Activated CD4-positive, alpha-beta memory T cell treated with anti-CD3 and anti-CD28 coated beads, Interleukin-2, amount 10 ng/mL, durations not matched to agents 7 days and 5 days (primary cell): ENCODE measurements at regions of chr2 and their contacts with region 1.

Region 1: DNA sequence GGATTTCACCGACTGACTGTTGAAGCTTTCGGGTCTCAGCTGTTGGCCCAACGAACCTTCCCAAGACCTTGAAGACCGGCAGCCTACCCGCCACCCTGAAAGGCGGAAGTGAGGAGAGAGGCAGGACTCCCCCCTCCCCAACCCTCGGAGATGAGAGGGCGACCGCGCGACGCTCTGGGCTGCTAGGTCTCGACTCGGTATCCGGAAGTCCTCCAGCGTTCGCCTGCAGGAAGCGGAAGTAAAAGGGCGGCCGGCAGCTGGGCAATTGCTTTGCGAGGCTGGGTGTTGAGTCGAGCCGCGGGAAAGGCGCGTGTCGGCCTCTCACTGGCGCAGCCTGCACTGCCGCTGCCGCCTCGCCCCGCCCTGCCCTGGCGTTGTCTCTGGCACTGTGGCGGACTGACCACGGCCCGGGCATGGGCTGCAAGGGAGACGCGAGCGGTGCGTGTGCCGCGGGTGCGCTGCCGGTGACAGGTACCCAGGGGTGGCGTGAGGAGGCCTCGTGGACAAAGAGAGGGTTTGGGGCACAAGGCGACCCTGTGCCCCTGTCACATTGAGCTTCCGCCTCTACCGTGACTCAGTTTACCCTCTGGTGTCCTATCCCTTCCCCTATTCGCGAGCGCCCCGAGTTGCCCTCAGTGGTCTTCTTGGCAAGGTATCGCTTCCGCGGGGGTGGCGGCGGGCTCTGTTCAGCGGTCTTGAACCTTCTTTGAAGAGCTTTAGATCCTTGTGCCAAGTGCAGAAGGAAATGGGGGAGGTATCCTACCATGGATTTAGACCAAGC is at the start of gene UGGT1:
- DNase-seq: peak; percentile 96
- H3K4me3 Mint-ChIP-seq: peak within 1 kb of the TSS; percentile 79
- H3K27ac Mint-ChIP-seq: peak within 1 kb of the TSS; percentile 79
- H3K4me1 Mint-ChIP-seq: peaks cover 56% of the 10 kb centered on the region
- H3K27me3 Mint-ChIP-seq: no peaks in the 10 kb centered on the region
- total RNA-seq, gene UGGT1: 56.2 to 61.0 TPM

Region 2: GRCh38 chr2:128027801-128028667 is 63.1 kb before region 1 on chr2 and contains the start of gene SAP130:
- CTCF ChIA-PET with region 1: interaction called, 5 read pairs
- POLR2A ChIA-PET with region 1: interaction called, 84 read pairs
- DNase-seq: peak; percentile 98
- H3K4me3 Mint-ChIP-seq: peak within 1 kb of the TSS; percentile 98
- H3K27ac Mint-ChIP-seq: peak within 1 kb of the TSS; percentile 81
- H3K4me1 Mint-ChIP-seq: peaks cover 18% of the 10 kb centered on the region
- H3K27me3 Mint-ChIP-seq: peaks cover 13% of the 10 kb centered on the region
- total RNA-seq, gene SAP130: 36.6 to 37.5 TPM

Region 3: GRCh38 chr2:128103407-128103806 is 12.3 kb after region 1 on chr2:
- CTCF ChIA-PET with region 1: interaction called, 6 read pairs
- POLR2A ChIA-PET with region 1: interaction called, 55 read pairs
- DNase-seq: no peak
- H3K4me3 Mint-ChIP-seq: no peak overlapping the region
- H3K27ac Mint-ChIP-seq: no peak overlapping the region
- H3K4me1 Mint-ChIP-seq: peaks cover 13% of the 10 kb centered on the region
- H3K27me3 Mint-ChIP-seq: no peaks in the 10 kb centered on the region

Region 4: DNA sequence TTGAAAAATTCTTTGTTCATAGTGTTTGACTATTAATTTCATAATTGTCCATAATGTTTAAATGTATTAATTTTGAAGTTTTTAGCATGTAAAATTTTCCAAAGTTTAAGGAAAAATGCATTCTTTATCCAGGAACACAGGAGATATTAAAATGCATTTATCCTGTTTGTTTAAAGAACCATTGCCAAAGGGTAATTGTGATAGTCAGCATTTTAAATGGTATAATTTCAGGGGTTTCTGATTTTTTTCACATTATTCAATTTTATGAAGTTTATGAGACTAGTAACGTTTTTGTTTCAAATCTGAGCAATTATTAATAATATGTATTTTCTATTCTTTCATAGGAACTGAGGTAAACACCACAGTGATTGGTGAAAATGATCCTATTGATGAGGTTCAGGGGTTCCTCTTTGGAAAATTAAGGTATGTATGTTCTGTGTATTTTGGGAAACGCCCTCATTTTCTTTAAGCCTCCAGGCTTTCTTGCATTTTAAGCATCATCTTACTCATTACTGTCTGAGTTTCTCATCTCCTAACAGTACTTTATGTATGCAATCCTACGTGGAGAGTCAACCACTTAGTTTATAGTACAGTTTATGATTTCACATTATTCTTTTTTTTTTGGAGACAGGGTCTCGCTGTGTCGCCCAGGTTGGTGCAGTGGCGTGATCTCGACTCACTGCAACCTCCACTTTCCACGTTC is 24.9 kb after region 1 on chr2:
- CTCF ChIA-PET with region 1: no interaction called
- POLR2A ChIA-PET with region 1: interaction called, 22 read pairs
- DNase-seq: no peak
- H3K4me3 Mint-ChIP-seq: no peak overlapping the region
- H3K27ac Mint-ChIP-seq: no peak overlapping the region
- H3K4me1 Mint-ChIP-seq: no peaks in the 10 kb centered on the region
- H3K27me3 Mint-ChIP-seq: no peaks in the 10 kb centered on the region

Region 5: GRCh38 chr2:128202791-128203190 is 111.7 kb after region 1 on chr2:
- CTCF ChIA-PET with region 1: no interaction called
- POLR2A ChIA-PET with region 1: no interaction called
- DNase-seq: no peak
- H3K4me3 Mint-ChIP-seq: no peak overlapping the region
- H3K27ac Mint-ChIP-seq: no peak overlapping the region
- H3K4me1 Mint-ChIP-seq: no peaks in the 10 kb centered on the region
- H3K27me3 Mint-ChIP-seq: peaks cover 6% of the 10 kb centered on the region